ENCODE measurements at regions of chr10 and their contacts with region 1.

Region 1: GRCh38 chr10:53029449-53029848 is 256.9 kb upstream of the MBL2 start:
- DNase-seq: no peak
- ATAC-seq: no peak
- H3K4me3 ChIP-seq: no peak overlapping the region
- H3K27ac ChIP-seq: peak overlapping the region; percentile 51
- H3K4me1 ChIP-seq: 0 out of 2 replicates have a peak, but pooled peaks cover 8% of the 10 kb centered on the region
- H3K27me3 ChIP-seq: no peaks in the 10 kb centered on the region
- CTCF ChIP-seq: no peak

Region 2: DNA sequence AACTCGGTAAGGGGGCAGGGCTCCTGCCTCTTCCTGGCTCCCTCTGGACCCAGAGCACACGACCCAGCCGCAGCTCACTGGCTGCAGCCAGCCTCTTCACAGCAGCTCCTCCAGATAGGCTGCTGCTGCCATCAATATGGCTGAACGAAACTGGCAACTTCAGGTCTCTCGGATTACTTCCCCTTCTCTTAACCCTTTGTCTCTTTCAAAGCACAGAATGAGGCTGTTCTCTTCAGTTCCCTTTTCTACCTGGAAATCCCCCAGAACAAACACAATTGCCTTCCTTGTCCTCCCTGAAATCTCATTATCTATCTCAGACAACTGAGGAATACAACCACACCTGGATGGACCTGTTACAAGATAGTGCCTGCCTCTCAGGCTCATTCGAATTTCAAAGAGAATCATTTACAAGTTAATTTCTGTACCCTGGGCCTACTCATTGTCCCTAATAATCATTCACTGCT is 63.5 kb before region 1 on chr10:
- CTCF ChIA-PET with region 1: no interaction called
- POLR2A ChIA-PET with region 1: interaction called, 14 read pairs
- in situ Hi-C with region 1: no loop called
- intact Hi-C with region 1: no loop called
- DNase-seq: no peak
- ATAC-seq: no peak
- H3K4me3 ChIP-seq: no peak overlapping the region
- H3K27ac ChIP-seq: no peak overlapping the region
- H3K4me1 ChIP-seq: no peaks in the 10 kb centered on the region
- H3K27me3 ChIP-seq: no peaks in the 10 kb centered on the region
- CTCF ChIP-seq: no peak

Measured in Panc1 (cell line).